ENCODE measurements at regions of chr5 and their contacts with region 1.

Region 1: DNA sequence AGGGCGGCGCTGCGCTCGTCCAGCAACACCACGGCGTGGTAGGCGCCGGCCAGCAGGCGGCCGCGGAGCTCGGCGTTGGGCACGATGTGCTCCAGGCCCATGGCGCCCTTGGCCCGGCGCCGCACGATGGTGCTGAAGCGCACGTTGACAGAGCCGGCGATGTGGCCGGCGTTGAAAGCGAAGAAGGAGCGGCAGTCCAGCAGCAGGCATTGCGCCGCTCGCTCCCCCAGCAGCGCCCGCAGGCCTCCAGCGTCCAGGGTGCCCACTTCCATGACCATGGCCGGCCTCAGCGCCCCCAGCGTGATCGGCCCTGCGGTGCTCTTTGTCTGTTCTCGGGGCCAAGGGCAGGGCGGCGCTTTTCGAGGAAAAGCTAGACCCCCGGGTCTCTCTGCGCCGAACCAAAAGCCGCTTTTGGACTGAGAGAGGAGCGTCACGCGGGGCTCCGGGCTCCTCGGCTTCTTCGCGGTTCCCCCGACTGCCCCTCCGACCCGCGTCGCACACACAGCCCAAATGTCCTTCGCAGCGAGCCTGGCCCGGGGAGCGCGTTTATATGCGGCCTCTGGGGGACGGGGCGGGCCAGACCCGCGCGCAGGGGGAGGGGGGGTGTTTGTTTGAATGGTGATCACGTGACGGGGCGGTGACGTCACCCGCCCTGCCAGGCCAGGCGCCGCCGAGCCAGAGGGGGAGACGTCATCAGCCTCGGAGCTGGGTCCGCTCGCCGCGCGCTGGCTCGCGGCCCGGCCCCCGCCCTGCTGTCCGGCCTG is at the start of gene DUSP1:
- DNase-seq: peak; percentile 100
- total RNA-seq, gene DUSP1: 49.9 TPM

Region 2: DNA sequence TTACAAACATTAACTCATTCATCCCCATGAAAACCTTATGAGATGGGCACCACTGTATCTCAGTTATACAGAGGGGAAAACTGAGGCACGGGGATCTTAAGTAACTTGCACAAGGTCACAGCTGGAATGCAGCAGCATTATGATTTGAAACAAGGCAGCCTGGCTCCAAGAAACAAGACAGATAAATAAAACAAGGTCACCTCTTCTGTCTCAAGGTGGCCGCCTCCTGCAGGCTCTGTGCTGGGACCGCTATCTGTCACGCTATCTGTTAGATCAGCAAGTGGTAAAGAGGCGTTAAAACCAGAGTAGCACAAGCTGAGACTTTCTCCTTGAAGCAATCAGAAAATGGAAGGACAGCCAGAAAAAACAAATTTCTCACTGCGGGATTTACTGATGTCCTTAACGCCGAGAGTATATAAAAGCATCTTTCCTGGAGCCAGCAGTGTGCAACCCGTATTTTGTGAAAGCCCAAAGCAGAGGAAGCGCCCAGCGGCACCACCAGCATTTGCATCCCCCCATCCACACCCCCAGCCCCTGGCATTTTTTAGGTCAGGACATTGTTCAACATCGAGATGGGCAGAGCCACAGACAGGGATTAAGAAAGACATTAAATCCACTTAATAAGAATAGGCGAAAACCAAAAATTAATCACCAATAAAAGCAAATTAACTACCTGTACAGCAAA is 48.6 kb before region 1 on chr5:
- intact Hi-C with region 1: no loop called
- DNase-seq: no peak

Region 3: DNA sequence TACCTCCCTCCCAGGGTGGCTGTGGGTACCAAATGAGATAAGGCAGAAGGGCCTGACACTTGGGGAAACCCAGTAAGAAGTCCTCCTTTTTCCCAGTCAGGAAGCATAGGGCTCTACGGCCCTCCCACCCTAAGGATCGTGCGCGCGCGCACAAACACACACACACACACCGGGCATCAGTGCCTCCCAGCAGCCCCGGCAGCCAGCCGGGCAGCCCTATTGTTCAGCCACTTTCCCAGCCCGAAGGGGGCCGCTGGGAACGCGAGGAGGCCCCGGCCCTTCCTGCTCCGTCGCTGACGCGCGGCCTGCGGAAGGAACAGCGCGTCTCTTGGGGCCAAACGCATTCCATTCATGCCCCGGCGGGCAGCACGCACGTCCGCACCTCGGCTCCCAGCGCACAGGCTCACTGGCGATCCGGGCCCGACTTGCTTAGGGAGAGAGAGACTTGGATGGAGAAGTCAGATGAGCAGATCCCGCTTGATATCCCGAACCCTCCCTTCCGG is 22.5 kb before region 1 on chr5:
- intact Hi-C with region 1: loop called (anchors 1 kb)
- DNase-seq: peak; percentile 93

Region 4: DNA sequence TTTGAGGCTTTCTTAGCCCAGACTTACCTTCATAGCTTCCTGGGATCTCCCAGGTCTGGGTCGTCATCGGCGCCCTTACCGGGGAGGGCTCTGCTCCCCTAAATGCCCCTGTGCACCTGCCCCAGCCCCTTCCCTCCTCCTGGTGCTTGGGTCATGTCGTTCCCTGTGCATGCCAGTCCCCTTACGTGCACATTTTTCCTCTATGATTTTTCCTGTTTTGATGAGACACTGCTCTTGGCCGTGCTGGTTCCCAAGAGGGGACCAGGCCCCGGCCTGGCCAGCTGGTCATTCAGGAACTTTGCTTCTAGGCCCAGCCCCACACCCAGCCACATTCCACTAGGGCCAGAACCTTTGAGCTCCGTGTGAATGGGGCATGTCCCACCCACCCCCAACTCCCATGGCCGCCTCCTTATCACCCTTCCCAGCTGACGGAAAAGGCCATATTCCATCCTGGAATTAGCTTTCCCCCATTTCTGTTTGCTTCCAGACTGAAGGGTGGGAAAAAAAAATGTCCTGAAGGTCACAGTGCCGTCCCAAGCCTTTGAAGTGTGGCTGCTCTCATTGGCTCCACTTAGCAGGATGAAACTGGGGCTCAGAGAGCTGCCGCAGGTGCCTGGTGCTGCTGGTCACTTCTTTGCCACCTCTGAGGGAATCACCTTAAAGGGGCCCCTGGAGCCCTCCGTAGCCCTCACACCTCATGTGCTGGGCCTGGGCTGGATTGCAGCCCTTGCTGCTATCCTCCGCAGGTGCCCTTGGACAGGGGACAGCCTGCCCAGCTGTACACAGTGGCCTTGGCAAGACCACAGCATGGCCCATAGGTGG is 88.3 kb after region 1 on chr5:
- intact Hi-C with region 1: loop called (anchors 1 kb)
- DNase-seq: peak; percentile 82

Region 5: DNA sequence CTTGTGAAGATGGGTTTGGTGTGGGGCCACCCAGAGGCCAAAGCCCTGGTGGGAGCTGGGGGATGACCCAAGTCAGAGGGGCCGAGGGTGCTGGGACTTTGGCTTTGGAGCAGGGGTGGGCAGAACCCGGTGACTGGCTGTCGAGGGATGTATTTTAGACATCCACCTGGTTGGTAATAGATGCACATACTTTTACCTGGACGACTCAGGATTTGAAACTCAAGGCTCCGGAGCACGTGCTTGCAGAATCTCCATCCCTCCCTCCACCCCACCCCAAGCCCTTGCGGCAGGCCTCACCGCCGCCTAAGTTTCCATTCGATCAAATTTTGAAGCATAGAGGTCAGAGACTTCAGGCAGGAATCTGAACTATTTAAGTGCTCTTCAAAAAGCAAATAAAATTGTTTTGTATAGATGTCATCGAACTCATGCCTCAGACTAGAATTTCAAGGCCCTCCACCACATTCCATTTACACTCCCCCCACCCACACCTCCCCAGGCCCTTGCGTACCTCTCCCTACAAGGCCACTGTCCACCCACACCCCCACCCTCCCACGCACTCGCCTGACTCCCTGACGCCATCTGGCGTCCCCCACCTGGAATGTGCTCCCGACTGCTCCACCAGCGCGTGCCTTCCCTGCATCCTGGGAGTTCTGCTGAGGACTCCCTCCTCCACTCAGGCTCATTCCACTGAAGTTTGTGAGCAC is 131.8 kb after region 1 on chr5:
- intact Hi-C with region 1: loop called (anchors 2 kb)
- DNase-seq: peak; percentile 87

Measured in cardiac septum (tissue), 1 donor.